Transverse colon (tissue), 4 donors: ENCODE measurements at regions of chr2 and their contacts with region 1.

Region 1: GRCh38 chr2:218194880-218195279 is 22.1 kb upstream of the ARPC2 start:
- DNase-seq: no peak
- H3K4me3 ChIP-seq: no peak overlapping the region
- H3K27ac ChIP-seq: no peak overlapping the region
- H3K4me1 ChIP-seq: peaks cover 0 to 23% (median 0%) of the 10 kb centered on the region in 4 donors
- H3K27me3 ChIP-seq: no peaks in the 10 kb centered on the region
- CTCF ChIP-seq: no peak
- EP300 ChIP-seq: no peak
- POLR2A ChIP-seq: no peak

Region 2: DNA sequence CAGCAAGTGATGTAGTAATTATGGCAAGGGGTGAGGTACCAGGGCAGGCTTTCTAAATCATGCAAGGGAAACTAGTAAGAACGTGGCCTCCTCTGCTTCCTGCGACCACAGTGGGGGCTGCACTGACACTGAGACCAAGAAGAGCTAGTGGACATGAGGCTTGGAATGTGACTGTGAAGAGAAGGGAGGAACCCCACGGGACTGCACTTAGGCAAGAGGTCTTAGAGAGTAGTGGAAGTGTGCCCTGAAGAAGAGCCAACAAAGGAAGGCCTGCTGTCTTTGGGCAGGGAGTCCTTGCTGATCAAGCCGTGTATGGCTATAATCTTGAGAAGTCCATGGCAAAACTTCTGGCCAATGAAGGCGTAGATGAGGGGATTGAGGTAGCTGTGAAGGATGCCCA is 134.8 kb before region 1 on chr2:
- in situ Hi-C with region 1: no loop called
- intact Hi-C with region 1: no loop called
- DNase-seq: no peak
- H3K4me3 ChIP-seq: no peak overlapping the region
- H3K27ac ChIP-seq: no peak overlapping the region
- H3K4me1 ChIP-seq: no peaks in the 10 kb centered on the region
- H3K27me3 ChIP-seq: no peaks in the 10 kb centered on the region
- CTCF ChIP-seq: no peak
- EP300 ChIP-seq: no peak
- POLR2A ChIP-seq: no peak

Region 3: GRCh38 chr2:218257390-218257981 is 62.6 kb after region 1 on chr2:
- in situ Hi-C with region 1: loop called in 1 of 4 experiments (anchors 5 kb)
- intact Hi-C with region 1: no loop called
- DNase-seq: peak; percentile 31
- H3K4me3 ChIP-seq: no peak overlapping the region
- H3K27ac ChIP-seq: peak overlapping the region; percentile 14 to 87 (median 38)
- H3K4me1 ChIP-seq: peaks cover 36 to 43% (median 41%) of the 10 kb centered on the region in 4 donors
- H3K27me3 ChIP-seq: no peaks in the 10 kb centered on the region
- CTCF ChIP-seq: peak; percentile 32 to 70 (median 53)
- EP300 ChIP-seq: no peak
- POLR2A ChIP-seq: no peak

Region 4: DNA sequence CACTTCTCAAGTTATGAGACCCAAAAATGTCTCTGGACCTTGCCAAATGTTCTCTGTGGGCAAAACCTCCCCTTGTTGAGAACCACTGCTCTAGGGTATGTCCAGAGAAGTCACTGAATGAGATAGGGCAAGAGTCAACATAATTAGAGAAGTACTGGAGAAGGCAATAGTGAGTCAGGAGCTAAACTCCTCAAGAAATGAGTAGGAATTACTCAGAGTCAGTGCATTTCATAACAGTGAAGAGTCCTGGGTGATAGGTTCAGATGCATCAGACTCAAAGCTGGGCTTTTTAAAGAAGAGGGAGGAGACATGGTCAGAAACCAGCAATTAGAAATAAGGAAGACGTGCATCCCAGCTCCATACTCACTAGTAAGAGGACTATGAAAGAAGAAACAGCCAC is 904.4 kb after region 1 on chr2:
- in situ Hi-C with region 1: no loop called
- intact Hi-C with region 1: loop called (anchors 5 kb)
- DNase-seq: no peak
- H3K4me3 ChIP-seq: no peak overlapping the region
- H3K27ac ChIP-seq: no peak overlapping the region
- H3K4me1 ChIP-seq: peaks cover 0 to 12% (median 0%) of the 10 kb centered on the region in 4 donors
- H3K27me3 ChIP-seq: no peaks in the 10 kb centered on the region
- CTCF ChIP-seq: no peak
- EP300 ChIP-seq: no peak
- POLR2A ChIP-seq: no peak